ENCODE measurements at regions of chr2 and their contacts with region 1.

Region 1: DNA sequence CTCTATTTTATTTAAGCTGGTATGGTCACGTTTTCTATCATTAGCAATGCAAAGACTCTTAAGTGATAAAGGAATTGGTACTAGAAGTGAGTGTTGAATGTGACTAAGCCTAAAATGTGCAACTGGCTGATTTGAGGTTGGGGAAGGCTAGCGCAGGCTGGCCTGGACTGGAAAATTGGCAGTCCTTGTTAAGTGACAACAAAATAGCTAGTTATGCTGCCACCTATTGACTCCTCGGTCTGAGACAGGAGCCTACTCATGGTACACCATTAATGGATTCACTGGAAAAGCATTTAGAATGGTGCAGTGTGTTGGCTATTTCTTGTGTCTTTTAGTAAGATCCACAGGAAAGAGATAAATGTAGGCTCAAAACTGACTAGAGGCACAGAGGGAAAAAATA is 5.7 kb upstream of the WIPF1 start:
- H3K4me3 Mint-ChIP-seq: no peak overlapping the region
- H3K27ac Mint-ChIP-seq: peak overlapping the region; percentile 70
- H3K4me1 Mint-ChIP-seq: peaks cover 76% of the 10 kb centered on the region
- H3K27me3 Mint-ChIP-seq: no peaks in the 10 kb centered on the region

Region 2: GRCh38 chr2:174573621-174574081 is 29.6 kb before region 1 on chr2:
- intact Hi-C with region 1: loop called (anchors 5 kb)
- H3K4me3 Mint-ChIP-seq: no peak overlapping the region
- H3K27ac Mint-ChIP-seq: peak overlapping the region; percentile 24
- H3K4me1 Mint-ChIP-seq: peaks cover 51% of the 10 kb centered on the region
- H3K27me3 Mint-ChIP-seq: no peaks in the 10 kb centered on the region

Region 3: DNA sequence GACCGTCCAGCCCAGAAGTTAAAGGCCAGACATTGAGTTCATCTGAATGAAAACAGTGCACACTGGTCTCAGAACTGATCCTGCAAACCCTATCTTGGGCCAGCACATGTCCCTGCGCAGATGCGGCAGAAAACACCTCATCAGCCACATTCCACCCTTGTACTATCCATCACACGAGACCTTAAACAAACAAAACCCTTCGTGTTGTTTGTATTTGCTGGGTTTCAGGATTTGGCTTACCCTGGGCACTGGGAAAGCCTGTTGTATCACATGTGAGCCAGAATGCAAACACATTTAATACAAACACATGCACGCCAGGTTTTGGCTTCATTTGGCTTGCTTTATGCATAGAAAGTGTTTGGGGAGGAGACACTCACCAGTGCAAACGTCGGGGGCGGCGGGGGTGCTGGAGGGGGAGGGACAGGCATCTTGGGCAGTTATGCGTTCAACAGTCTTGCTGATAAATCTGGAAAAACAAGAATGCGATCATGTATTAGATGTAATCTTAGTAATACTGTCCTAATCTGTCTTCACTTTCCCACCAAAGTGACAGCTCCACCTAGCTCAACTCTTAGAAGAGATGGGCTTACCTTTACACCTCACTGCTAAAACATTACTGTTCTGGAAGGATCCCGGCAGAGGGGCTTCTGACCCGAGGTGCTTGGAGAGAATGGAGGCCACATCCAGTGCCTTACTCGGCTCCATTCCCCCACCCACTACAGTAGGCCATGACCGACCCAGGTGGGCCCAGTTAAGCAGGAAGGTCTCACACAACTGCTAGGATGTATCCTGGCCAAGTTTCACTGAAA is 17.9 kb before region 1 on chr2:
- intact Hi-C with region 1: loop called (anchors 1 kb)
- H3K4me3 Mint-ChIP-seq: no peak overlapping the region
- H3K27ac Mint-ChIP-seq: peak overlapping the region; percentile 17
- H3K4me1 Mint-ChIP-seq: peaks cover 59% of the 10 kb centered on the region
- H3K27me3 Mint-ChIP-seq: no peaks in the 10 kb centered on the region

Region 4: DNA sequence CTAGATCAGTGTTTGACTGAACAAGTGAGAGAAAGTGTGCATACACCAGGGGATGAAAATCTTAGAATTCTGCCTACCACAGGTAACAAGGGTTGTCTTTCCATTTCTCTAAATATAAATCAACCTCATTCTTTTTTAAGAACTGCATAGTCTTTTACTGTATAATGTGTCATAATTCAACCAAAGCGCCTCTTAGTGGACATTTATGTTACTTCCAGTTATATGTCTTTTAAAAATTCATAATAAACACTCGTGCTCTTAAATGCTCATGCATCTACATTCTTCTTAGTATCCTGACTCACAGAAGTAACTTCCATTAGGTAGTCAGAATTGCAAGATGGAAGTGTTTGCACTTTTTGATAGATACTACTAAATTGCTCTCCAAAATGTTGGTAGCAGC is 84.8 kb after region 1 on chr2:
- intact Hi-C with region 1: loop called (anchors 1 kb)
- H3K4me3 Mint-ChIP-seq: no peak overlapping the region
- H3K27ac Mint-ChIP-seq: no peak overlapping the region
- H3K4me1 Mint-ChIP-seq: peaks cover 48% of the 10 kb centered on the region
- H3K27me3 Mint-ChIP-seq: peaks cover 17% of the 10 kb centered on the region

Region 5: DNA sequence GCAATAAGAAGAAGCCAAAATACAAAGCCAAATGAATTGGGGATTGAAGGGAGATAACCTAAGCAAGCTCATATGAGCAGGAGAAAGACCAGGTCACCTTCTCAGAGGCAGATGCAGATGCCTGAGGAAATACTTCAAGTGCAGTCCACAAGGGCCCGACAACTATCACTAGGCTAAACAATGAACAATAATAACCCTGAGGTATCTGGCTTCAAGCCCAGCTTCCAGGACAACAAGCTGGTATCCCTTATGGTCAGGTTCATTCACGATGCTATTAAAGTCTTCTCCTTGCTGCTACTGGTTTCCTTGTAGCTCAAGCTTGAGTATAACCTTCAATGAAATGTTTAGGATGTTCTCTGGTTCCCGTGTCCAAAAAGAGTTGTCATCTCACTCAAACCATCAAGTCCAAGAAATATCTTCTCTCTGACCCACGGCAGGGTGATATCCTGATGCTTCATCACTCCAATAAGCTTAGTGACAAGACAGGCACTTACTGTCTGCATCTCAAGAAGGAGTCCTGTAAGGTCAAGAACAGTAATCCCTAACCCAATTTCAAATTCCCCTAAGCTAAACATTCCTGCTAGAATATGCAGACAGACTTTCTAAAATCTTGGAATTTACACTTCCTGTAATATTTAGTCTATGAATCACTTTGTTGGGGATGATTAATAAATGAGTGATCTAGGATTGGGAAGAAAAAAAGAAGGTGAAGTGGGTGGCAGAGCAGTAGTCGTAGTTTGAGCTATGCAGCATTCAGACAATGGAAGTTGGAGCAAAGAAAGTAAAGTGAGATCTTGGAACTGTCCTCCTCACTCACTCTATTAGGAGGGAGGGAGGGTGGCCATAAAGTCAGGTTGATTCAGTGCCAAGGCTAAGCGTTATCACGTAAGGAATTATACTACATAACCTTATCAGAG is 368.8 kb after region 1 on chr2:
- intact Hi-C with region 1: no loop called
- H3K4me3 Mint-ChIP-seq: no peak overlapping the region
- H3K27ac Mint-ChIP-seq: no peak overlapping the region
- H3K4me1 Mint-ChIP-seq: no peaks in the 10 kb centered on the region
- H3K27me3 Mint-ChIP-seq: peaks cover 14% of the 10 kb centered on the region

Measured in dendritic cell treated with granulocyte-macrophage colony-stimulating factor and Interleukin-4, amounts not matched to agents 40 ng/mL and 50 ng/mL, for 4 days (primary cell).